ENCODE measurements at regions of chr9 and their contacts with region 1.

Region 1: DNA sequence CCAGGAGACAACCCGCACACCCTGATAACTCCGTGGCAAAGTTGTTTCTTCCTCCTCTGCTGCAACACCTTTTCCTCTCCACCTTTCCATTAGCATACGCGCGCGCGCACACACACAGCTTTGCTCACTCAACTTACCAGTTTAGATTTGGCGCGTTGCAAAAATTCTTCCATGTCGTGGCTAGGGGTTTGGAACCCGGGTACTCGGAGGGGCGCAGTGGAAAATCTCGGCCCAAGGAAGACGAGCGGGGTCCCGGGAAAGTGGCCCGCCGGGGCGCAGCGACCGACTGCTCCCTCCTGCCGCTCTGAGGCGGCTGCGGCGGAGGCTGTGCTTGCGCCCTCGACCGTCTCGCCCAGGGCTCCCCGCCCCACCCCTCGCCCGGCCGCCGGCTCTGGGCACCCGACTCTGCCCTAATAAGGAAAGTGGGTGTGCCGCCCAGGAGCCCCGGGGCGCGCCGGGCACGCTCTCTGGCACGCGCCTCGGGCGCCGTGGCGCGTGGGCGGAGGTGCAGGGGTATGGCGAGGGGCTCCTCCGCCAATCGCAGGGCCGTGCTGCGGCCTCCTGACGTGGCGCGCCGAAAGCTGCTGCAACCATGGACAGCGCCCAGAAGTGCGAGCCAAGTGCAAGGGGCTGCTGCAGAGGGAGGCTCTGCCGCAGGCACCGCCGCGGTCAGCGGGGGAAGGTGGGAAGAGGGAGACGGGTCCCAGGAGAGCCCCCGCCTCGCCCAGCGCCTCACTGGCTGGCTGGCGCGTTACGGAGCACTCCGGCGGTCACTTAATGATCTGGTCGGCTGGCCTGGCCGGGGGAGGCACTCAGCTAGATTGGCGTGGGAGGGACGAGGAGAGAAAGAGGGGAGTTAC is at the start of gene PRUNE2:
- DNase-seq: peak; percentile 94
- H3K4me3 ChIP-seq: peak within 1 kb of the TSS; percentile 50 to 82 (median 75)
- H3K27ac ChIP-seq: peak within 1 kb of the TSS; percentile 85 to 95 (median 88)
- H3K4me1 ChIP-seq: peaks cover 0 to 25% (median 11%) of the 10 kb centered on the region in 4 donors
- H3K27me3 ChIP-seq: no peaks in the 10 kb centered on the region
- CTCF ChIP-seq: no peak
- EP300 ChIP-seq: peak in 2 of 4 donors; percentile 26 to 83
- POLR2A ChIP-seq: peak; percentile 88 to 98
- total RNA-seq, gene PRUNE2: 440 to 536 (median 490) TPM

Region 2: GRCh38 chr9:76605321-76605900 is 300.6 kb before region 1 on chr9:
- intact Hi-C with region 1: loop called (anchors 10 kb)
- DNase-seq: no peak
- H3K4me3 ChIP-seq: no peak overlapping the region
- H3K27ac ChIP-seq: no peak overlapping the region
- H3K4me1 ChIP-seq: peaks cover 0 to 16% (median 8%) of the 10 kb centered on the region in 4 donors
- H3K27me3 ChIP-seq: peaks cover 0 to 10% (median 0%) of the 10 kb centered on the region in 3 donors
- CTCF ChIP-seq: no peak
- EP300 ChIP-seq: no peak
- POLR2A ChIP-seq: no peak

Region 3: DNA sequence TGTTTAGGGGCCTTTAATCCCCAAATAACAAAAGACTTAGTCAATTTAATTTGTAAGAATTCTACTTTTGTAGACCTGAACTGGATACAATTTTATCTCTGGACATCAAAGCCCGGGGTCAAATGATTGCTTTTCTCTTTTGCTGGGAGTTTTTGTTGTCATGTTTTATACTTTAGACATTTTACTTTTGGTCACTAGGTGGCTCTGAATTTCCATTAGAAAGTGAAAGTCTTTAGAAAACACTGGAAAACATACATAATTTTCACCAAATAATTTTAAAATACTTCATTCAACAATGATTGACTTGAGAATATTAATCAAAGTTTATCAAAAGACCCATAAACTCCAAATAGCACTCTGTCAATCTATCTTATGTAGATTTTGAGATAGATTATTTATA is 144.6 kb before region 1 on chr9:
- intact Hi-C with region 1: loop called (anchors 5 kb)
- DNase-seq: no peak
- H3K4me3 ChIP-seq: no peak overlapping the region
- H3K27ac ChIP-seq: peak overlapping the region in 1 of 4 donors; percentile 2
- H3K4me1 ChIP-seq: peaks cover 0 to 41% (median 22%) of the 10 kb centered on the region in 4 donors
- H3K27me3 ChIP-seq: no peaks in the 10 kb centered on the region
- CTCF ChIP-seq: peak in 2 of 4 experiments; percentile 11 to 25
- EP300 ChIP-seq: no peak
- POLR2A ChIP-seq: no peak

Region 4: GRCh38 chr9:76810377-76810957 is 95.6 kb before region 1 on chr9:
- intact Hi-C with region 1: loop called (anchors 2 kb)
- DNase-seq: no peak
- H3K4me3 ChIP-seq: no peak overlapping the region
- H3K27ac ChIP-seq: peak overlapping the region; percentile 27 to 94 (median 49)
- H3K4me1 ChIP-seq: peaks cover 0 to 36% (median 20%) of the 10 kb centered on the region in 4 donors
- H3K27me3 ChIP-seq: no peaks in the 10 kb centered on the region
- CTCF ChIP-seq: peak; percentile 67 to 89 (median 81)
- EP300 ChIP-seq: no peak
- POLR2A ChIP-seq: no peak

Region 5: GRCh38 chr9:76987594-76988200 is 81.7 kb after region 1 on chr9:
- intact Hi-C with region 1: loop called (anchors 5 kb)
- DNase-seq: no peak
- H3K4me3 ChIP-seq: no peak overlapping the region
- H3K27ac ChIP-seq: no peak overlapping the region
- H3K4me1 ChIP-seq: peaks cover 0 to 5% (median 0%) of the 10 kb centered on the region in 4 donors
- H3K27me3 ChIP-seq: no peaks in the 10 kb centered on the region
- CTCF ChIP-seq: peak; percentile 44 to 53 (median 50)
- EP300 ChIP-seq: no peak
- POLR2A ChIP-seq: no peak